ENCODE measurements at regions of chr9 and their contacts with region 1.

Region 1: DNA sequence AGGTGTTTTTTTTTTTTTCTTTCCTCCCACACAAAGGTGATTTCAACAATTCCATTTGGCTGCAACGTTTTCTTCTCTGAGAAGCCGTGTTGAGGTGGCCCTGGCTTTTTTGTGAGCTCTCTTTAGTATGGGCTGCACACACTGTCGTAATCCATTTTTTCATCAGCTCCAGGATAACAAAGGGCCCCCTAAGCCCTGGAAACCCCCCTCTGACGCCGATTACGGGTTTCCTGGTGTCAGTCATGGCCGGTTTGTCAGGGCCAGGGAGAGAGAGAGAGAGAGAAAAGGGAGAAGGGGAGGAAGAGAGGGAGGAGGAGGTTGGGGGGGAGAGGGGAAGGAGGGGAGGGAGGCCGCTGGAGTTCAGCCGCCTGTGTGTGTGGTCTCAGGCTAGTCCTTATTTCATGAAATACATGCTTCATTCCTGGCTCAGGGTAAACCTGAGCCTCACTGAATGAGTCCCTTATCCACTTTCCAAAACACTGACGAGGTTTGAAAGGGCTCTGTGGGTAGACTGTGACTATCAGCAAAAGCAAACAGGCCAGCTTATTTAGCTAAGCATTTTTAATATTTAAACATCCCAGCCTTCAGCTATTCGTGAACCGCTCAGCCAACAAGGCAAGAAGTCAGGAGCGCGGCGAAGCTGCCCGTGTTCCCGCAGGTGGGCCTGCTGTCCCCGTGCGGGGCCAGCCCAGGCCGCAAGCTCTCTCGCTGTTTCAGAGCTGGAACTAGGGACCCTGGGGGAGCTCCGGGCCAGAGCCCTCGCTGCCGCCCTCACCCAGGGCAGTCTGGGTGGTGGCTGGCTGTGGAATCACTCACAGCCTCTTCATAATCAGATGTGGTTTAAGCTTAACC is 172.8 kb downstream of the ERCC6L2 start:
- DNase-seq: no peak
- H3K4me3 Mint-ChIP-seq: peak overlapping the region; percentile 35
- H3K27ac Mint-ChIP-seq: peak overlapping the region; percentile 87
- H3K4me1 Mint-ChIP-seq: peaks cover 3% of the 10 kb centered on the region
- H3K27me3 Mint-ChIP-seq: peaks cover 3% of the 10 kb centered on the region

Region 2: GRCh38 chr9:95966306-95966705 is 82.0 kb before region 1 on chr9:
- intact Hi-C with region 1: no loop called
- DNase-seq: no peak
- H3K4me3 Mint-ChIP-seq: no peak overlapping the region
- H3K27ac Mint-ChIP-seq: no peak overlapping the region
- H3K4me1 Mint-ChIP-seq: peaks cover 2% of the 10 kb centered on the region
- H3K27me3 Mint-ChIP-seq: no peaks in the 10 kb centered on the region

Region 3: GRCh38 chr9:96020792-96021550 is 27.4 kb before region 1 on chr9:
- intact Hi-C with region 1: loop called (anchors 1 kb)
- DNase-seq: peak; percentile 91
- H3K4me3 Mint-ChIP-seq: peak overlapping the region; percentile 84
- H3K27ac Mint-ChIP-seq: peak overlapping the region; percentile 96
- H3K4me1 Mint-ChIP-seq: peaks cover 72% of the 10 kb centered on the region
- H3K27me3 Mint-ChIP-seq: peaks cover 12% of the 10 kb centered on the region